CD8-positive, alpha-beta T cell (primary cell): ENCODE measurements at regions of chr9 and their contacts with region 1.

Region 1: GRCh38 chr9:87950765-87951488 is 23.4 kb downstream of the CDK20 start:
- DNase-seq: peak in 1 of 9 experiments; percentile 26
- ATAC-seq: no peak
- H3K4me3 ChIP-seq: no peak overlapping the region
- H3K4me3 Mint-ChIP-seq: no peak overlapping the region
- H3K27ac ChIP-seq: no peak overlapping the region
- H3K27ac Mint-ChIP-seq: no peak overlapping the region
- H3K4me1 ChIP-seq: no peaks in the 10 kb centered on the region
- H3K4me1 Mint-ChIP-seq: no peaks in the 10 kb centered on the region
- H3K27me3 ChIP-seq: no peaks in the 10 kb centered on the region
- H3K27me3 Mint-ChIP-seq: peaks cover 40% of the 10 kb centered on the region
- CTCF ChIP-seq: peak; percentile 30

Region 2: DNA sequence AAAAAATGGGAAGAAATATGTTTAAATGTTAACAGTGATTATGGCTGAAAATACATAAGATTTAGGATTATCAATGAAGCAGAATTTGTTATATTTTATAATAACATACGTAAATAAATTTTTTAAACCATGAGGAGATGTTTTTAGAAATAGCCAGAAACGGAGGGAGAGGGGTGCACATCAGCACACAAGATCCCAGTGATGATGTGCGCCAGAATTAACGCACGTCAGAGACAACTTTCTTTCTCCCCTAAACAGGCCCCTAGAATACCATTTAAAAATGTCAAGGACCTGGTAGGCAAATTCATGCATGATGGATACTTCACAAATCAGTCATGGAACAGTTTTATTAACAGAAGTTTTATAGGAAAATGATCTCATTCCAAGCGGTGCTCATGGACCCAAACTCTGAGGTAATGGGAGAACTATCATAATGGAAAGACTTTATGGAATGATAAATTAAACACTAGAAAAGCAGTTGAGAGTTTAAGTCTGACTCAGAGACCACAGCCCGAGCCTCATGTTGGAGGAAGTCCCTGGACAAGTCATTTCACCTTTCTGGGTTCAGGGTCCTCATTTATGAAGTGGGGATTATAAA is 744.8 kb before region 1 on chr9:
- CTCF ChIA-PET with region 1: no interaction called
- POLR2A ChIA-PET with region 1: no interaction called
- intact Hi-C with region 1: no loop called
- DNase-seq: no peak
- ATAC-seq: no peak
- H3K4me3 ChIP-seq: no peak overlapping the region
- H3K4me3 Mint-ChIP-seq: no peak overlapping the region
- H3K27ac ChIP-seq: no peak overlapping the region
- H3K27ac Mint-ChIP-seq: no peak overlapping the region
- H3K4me1 ChIP-seq: no peaks in the 10 kb centered on the region
- H3K4me1 Mint-ChIP-seq: no peaks in the 10 kb centered on the region
- H3K27me3 ChIP-seq: no peaks in the 10 kb centered on the region
- H3K27me3 Mint-ChIP-seq: no peaks in the 10 kb centered on the region
- CTCF ChIP-seq: no peak

Region 3: GRCh38 chr9:89278997-89279739 is 1328.2 kb after region 1 on chr9:
- CTCF ChIA-PET with region 1: no interaction called
- POLR2A ChIA-PET with region 1: no interaction called
- intact Hi-C with region 1: loop called in 1 of 2 experiments (anchors 10 kb)
- DNase-seq: peak in 3 of 9 experiments; percentile 17 to 53 (median 42)
- ATAC-seq: peak; percentile 36
- H3K4me3 ChIP-seq: no peak overlapping the region
- H3K4me3 Mint-ChIP-seq: no peak overlapping the region
- H3K27ac ChIP-seq: no peak overlapping the region
- H3K27ac Mint-ChIP-seq: no peak overlapping the region
- H3K4me1 ChIP-seq: peaks cover 17% of the 10 kb centered on the region
- H3K4me1 Mint-ChIP-seq: peaks cover 25% of the 10 kb centered on the region
- H3K27me3 ChIP-seq: no peaks in the 10 kb centered on the region
- H3K27me3 Mint-ChIP-seq: no peaks in the 10 kb centered on the region
- CTCF ChIP-seq: peak; percentile 68